IMR-90 (cell line): ENCODE measurements at regions of chr5 and their contacts with region 1.

Region 1: GRCh38 chr5:69492391-69492922 is at the start of gene OCLN:
- DNase-seq: no peak
- ATAC-seq: peak; percentile 52
- H3K4me3 ChIP-seq: peak within 1 kb of the TSS; percentile 55
- H3K27ac ChIP-seq: no peak within 1 kb of the TSS
- H3K4me1 ChIP-seq: peaks cover 6% of the 10 kb centered on the region
- H3K27me3 ChIP-seq: peaks cover 47% of the 10 kb centered on the region
- CTCF ChIP-seq: no peak
- POLR2A ChIP-seq: no peak
- RAD21 ChIP-seq: no peak
- total RNA-seq, gene OCLN: 0.72 and 0.83 TPM in 2 replicates

Region 2: GRCh38 chr5:69152731-69153130 is 339.7 kb before region 1 on chr5:
- CTCF ChIA-PET with region 1: no interaction called
- POLR2A ChIA-PET with region 1: no interaction called
- dilution Hi-C with region 1: no loop called
- in situ Hi-C with region 1: no loop called
- intact Hi-C with region 1: no loop called
- DNase-seq: no peak
- ATAC-seq: no peak
- H3K4me3 ChIP-seq: no peak overlapping the region
- H3K27ac ChIP-seq: no peak overlapping the region
- H3K4me1 ChIP-seq: no peaks in the 10 kb centered on the region
- H3K27me3 ChIP-seq: no peaks in the 10 kb centered on the region
- CTCF ChIP-seq: no peak
- POLR2A ChIP-seq: no peak
- RAD21 ChIP-seq: no peak

Region 3: GRCh38 chr5:69444127-69444754 is 48.2 kb before region 1 on chr5:
- CTCF ChIA-PET with region 1: no interaction called
- POLR2A ChIA-PET with region 1: no interaction called
- dilution Hi-C with region 1: no loop called
- in situ Hi-C with region 1: no loop called
- intact Hi-C with region 1: loop called (anchors 10 kb)
- DNase-seq: no peak
- ATAC-seq: no peak
- H3K4me3 ChIP-seq: no peak overlapping the region
- H3K27ac ChIP-seq: no peak overlapping the region
- H3K4me1 ChIP-seq: no peaks in the 10 kb centered on the region
- H3K27me3 ChIP-seq: no peaks in the 10 kb centered on the region
- CTCF ChIP-seq: no peak
- POLR2A ChIP-seq: no peak
- RAD21 ChIP-seq: no peak

Region 4: GRCh38 chr5:69477170-69477569 is 15.3 kb before region 1 on chr5:
- CTCF ChIA-PET with region 1: no interaction called
- POLR2A ChIA-PET with region 1: no interaction called
- dilution Hi-C with region 1: no loop called
- in situ Hi-C with region 1: no loop called
- intact Hi-C with region 1: no loop called
- DNase-seq: no peak
- ATAC-seq: no peak
- H3K4me3 ChIP-seq: no peak overlapping the region
- H3K27ac ChIP-seq: no peak overlapping the region
- H3K4me1 ChIP-seq: no peaks in the 10 kb centered on the region
- H3K27me3 ChIP-seq: peaks cover 4% of the 10 kb centered on the region; the same call in 1 of the 2 replicates
- CTCF ChIP-seq: no peak
- POLR2A ChIP-seq: no peak
- RAD21 ChIP-seq: no peak